Endothelial cell of umbilical vein (primary cell): ENCODE measurements at regions of chr5 and their contacts with region 1.

Region 1: DNA sequence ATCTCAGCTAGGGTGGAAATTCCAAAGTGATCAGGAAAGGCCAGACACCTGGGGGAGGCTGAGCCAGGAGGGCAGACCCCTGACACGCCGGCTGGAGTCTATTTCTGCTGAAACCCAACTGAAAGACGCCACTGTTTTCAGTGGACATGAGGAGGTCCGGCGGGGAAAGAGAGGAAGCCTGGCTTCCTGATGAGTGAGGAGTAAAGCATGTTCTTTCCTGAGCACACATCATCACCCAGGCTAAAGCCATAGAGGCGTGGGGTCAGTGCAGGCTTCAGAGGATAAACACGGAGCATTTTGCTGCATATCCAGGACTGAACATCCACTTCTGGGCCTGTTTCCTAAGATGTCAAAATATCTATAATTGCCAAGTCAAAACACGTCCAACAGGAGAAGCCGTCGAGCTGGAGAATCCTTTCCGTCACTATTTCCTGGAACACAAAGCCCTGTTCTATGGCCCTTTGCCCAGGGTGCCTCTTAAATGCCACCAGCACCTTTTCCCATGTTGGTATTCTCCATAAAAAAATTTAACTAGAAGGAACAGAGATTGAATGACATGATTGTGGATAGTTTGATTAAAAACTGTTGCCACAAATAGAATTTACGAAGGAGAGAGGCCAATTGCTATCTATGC is 597.9 kb upstream of the ADAMTS16 start:
- DNase-seq: no peak
- H3K4me3 ChIP-seq: no peak overlapping the region
- H3K27ac ChIP-seq: no peak overlapping the region
- H3K4me1 ChIP-seq: no peaks in the 10 kb centered on the region
- H3K27me3 ChIP-seq: no peaks in the 10 kb centered on the region
- CTCF ChIP-seq: no peak
- POLR2A ChIP-seq: no peak

Region 2: DNA sequence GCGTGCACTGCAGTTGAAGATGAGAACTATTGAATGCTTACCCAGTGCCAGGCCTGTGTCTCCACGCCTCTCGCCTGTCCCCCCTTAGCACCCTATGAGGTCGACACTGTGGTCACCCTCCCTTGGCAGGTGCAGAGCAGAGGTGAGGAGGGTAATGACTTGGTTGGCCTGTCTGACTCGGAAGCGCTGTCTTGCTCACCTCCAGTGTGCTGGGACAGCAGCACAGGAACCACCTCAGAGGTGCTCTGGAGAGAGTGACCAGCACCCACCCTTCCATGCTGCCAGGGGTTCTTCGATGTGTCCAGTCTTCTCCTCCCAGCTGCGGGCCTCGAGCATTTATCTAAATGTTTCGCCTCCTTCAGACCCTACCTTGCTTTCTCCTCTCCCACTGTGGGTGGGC is 1612.5 kb before region 1 on chr5:
- CTCF ChIA-PET with region 1: no interaction called
- POLR2A ChIA-PET with region 1: no interaction called
- dilution Hi-C with region 1: no loop called
- intact Hi-C with region 1: loop called (anchors 10 kb)
- DNase-seq: no peak
- H3K4me3 ChIP-seq: no peak overlapping the region
- H3K27ac ChIP-seq: no peak overlapping the region
- H3K4me1 ChIP-seq: no peaks in the 10 kb centered on the region
- H3K27me3 ChIP-seq: no peaks in the 10 kb centered on the region
- CTCF ChIP-seq: no peak
- POLR2A ChIP-seq: no peak

Region 3: DNA sequence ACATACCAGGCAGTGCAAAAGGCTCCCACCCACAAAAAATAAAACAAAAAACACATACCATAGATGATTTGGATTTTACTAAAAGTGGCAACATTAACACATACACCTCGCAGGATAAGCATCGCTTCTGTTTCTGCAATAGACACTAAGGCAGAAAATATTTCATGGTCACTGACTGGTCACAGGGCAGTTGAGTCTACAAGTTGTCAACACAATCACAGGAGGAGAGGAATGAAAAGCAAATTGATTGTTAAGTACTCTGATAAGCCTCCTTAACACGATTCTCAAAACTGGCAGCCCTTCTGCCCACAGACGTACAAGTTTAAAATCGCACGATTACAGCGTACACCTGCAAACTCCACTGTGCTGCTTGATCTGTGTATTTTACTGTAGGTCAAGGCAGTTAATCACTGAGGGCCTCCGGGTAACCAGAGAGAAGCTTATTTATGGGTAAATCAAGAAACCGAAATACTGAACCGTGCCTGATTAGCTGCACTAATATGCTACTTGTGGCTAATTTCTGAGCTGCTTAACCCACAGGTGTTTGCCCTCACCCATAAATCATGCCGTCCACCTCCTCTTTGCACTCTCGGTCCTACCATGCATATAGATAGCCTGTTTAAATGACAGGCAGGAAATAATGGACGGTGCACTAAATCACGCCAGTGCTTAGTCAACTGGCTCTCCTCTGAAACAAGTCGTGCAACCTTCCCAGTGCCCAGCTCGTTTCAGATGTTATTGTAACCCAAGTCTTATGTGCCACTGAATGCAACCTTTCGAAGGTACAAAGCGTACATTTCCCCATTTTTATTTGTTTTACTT is 61.5 kb before region 1 on chr5:
- CTCF ChIA-PET with region 1: no interaction called
- POLR2A ChIA-PET with region 1: no interaction called
- dilution Hi-C with region 1: no loop called
- intact Hi-C with region 1: no loop called
- DNase-seq: no peak
- H3K4me3 ChIP-seq: no peak overlapping the region
- H3K27ac ChIP-seq: no peak overlapping the region
- H3K4me1 ChIP-seq: no peaks in the 10 kb centered on the region
- H3K27me3 ChIP-seq: no peaks in the 10 kb centered on the region
- CTCF ChIP-seq: no peak
- POLR2A ChIP-seq: no peak